A673 (cell line): ENCODE measurements at regions of chr18 and their contacts with region 1.

Region 1: DNA sequence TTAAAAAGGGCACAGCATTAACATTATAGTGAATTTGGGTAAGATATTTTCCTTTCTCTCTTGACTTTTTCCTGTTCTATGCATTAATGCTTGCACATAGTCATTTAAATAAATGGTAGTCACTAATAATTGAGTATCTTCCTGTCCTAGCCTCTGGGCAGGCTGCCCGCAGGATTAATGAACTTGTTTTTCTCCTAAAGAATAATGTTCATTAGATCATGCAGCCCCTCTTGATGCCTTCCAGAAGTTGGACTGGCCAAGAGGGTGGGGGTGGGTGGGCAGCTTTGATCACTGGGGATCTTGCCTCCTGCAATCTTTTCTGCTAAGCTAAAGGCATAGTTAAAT is 514.5 kb upstream of the CDH2 start:
- DNase-seq: no peak
- H3K4me3 ChIP-seq: no peak overlapping the region
- H3K27ac ChIP-seq: no peak overlapping the region
- H3K4me1 ChIP-seq: peaks cover 4% of the 10 kb centered on the region
- H3K27me3 ChIP-seq: no peaks in the 10 kb centered on the region
- CTCF ChIP-seq: no peak

Region 2: DNA sequence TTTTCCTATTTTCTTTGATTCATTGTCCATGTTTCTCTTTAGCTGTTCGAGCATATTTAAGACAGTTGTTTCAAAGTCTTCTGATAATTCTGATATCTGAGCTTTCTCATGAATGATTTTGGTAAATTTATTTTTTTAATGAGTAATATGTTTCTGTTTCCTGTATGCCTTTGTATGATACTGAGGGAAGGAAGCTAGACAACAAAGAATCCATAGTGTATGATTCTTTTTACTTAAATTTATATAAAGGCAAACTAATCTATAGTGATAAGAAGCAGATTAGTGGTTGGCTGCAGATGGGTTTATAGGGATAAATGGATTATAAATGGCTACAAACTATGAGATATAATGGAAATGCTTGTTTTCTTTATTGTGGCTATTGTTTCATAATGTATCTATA is 161.8 kb before region 1 on chr18:
- CTCF ChIA-PET with region 1: no interaction called
- POLR2A ChIA-PET with region 1: no interaction called
- intact Hi-C with region 1: no loop called
- DNase-seq: no peak
- H3K4me3 ChIP-seq: no peak overlapping the region
- H3K27ac ChIP-seq: no peak overlapping the region
- H3K4me1 ChIP-seq: no peaks in the 10 kb centered on the region
- H3K27me3 ChIP-seq: no peaks in the 10 kb centered on the region
- CTCF ChIP-seq: no peak

Region 3: GRCh38 chr18:28626757-28627156 is 64.7 kb before region 1 on chr18:
- CTCF ChIA-PET with region 1: no interaction called
- POLR2A ChIA-PET with region 1: no interaction called
- intact Hi-C with region 1: no loop called
- DNase-seq: no peak
- H3K4me3 ChIP-seq: no peak overlapping the region
- H3K27ac ChIP-seq: no peak overlapping the region
- H3K4me1 ChIP-seq: no peaks in the 10 kb centered on the region
- H3K27me3 ChIP-seq: no peaks in the 10 kb centered on the region
- CTCF ChIP-seq: no peak

Region 4: DNA sequence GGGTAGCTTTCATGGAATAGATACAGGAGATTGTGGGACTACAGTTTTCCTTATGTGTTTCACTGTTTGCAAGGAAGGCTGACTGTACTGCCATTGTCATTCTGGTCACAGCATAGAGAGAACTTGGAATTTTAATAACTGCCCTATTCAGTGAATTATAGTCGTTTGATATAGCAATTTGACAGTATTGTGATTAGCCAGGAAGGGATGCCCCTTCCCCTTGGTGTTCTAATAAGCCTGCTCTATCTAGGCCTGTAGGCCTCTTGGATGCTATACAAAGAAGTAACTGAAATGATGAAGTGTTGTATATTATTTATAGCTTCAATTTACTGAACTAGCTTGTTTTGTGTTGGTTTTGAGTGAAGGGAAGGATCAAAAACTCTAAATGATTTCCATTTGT is 14.0 kb after region 1 on chr18:
- CTCF ChIA-PET with region 1: no interaction called
- POLR2A ChIA-PET with region 1: no interaction called
- intact Hi-C with region 1: loop called (anchors 2 kb)
- DNase-seq: no peak
- H3K4me3 ChIP-seq: no peak overlapping the region
- H3K27ac ChIP-seq: no peak overlapping the region
- H3K4me1 ChIP-seq: peaks cover 9% of the 10 kb centered on the region
- H3K27me3 ChIP-seq: no peaks in the 10 kb centered on the region
- CTCF ChIP-seq: no peak